GM12878 (cell line): ENCODE measurements at regions of chr1 and their contacts with region 1.

Region 1: DNA sequence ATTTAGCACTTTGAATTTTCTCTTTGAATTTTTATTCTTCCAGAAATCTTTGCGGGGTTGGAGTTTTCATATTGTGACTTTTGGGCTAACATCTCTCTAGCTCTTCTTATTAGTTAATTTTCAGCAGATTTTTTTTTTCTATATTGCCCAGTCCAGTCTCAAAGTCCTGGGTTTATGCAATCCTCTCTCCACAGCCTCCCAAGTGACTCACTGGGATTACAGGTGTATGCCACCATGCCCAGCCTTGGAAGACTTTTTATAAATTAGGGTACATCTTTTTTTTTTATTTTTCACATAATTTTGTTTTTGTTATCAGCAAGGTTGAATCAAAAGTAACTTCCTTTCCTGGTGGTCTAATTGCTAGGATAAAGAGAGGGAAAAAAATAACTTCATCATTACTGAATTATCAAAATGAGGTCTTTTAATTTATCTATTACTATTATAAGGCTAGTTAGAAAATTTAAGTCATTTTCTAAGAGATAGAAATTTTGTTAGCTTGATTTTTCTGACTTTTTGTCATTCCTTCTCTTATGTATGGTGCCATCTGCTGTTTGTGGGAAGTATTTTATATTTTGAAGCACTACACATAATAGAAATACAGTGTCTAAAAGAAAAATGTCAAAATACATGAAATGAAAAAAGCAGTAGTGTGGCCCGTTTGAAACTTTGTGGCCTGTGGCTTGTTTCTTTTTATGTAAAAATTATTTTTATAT is 273.4 kb upstream of the CACYBP start:
- DNase-seq: no peak
- ATAC-seq: peak; percentile 48; the same call in 2 of the 3 replicates
- H3K4me3 ChIP-seq: no peak overlapping the region
- H3K27ac ChIP-seq: no peak overlapping the region
- H3K4me1 ChIP-seq: peaks cover 4% of the 10 kb centered on the region
- H3K27me3 ChIP-seq: no peaks in the 10 kb centered on the region
- CTCF ChIP-seq: peak; percentile 27 to 40 (median 29); a peak in 4 of 6 replicates
- EP300 ChIP-seq: no peak
- POLR2A ChIP-seq: no peak
- RAD21 ChIP-seq: peak; percentile 41; the same call in 1 of the 2 replicates

Region 2: GRCh38 chr1:173853074-173853473 is 873.2 kb before region 1 on chr1:
- CTCF ChIA-PET with region 1: no interaction called
- POLR2A ChIA-PET with region 1: no interaction called
- RAD21 ChIA-PET with region 1: no interaction called
- SMC1A ChIA-PET with region 1: no interaction called
- in situ Hi-C with region 1: no loop called
- intact Hi-C with region 1: no loop called
- DNase-seq: no peak
- ATAC-seq: no peak
- H3K4me3 ChIP-seq: no peak overlapping the region
- H3K27ac ChIP-seq: no peak overlapping the region
- H3K4me1 ChIP-seq: no peaks in the 10 kb centered on the region
- H3K27me3 ChIP-seq: no peaks in the 10 kb centered on the region
- CTCF ChIP-seq: no peak
- EP300 ChIP-seq: no peak
- POLR2A ChIP-seq: no peak
- RAD21 ChIP-seq: no peak

Region 3: GRCh38 chr1:174413632-174414031 is 312.7 kb before region 1 on chr1:
- CTCF ChIA-PET with region 1: interaction called, 5 read pairs
- POLR2A ChIA-PET with region 1: no interaction called
- RAD21 ChIA-PET with region 1: no interaction called
- SMC1A ChIA-PET with region 1: no interaction called
- in situ Hi-C with region 1: no loop called
- intact Hi-C with region 1: loop called (anchors 10 kb)
- DNase-seq: no peak
- ATAC-seq: peak; percentile 76
- H3K4me3 ChIP-seq: no peak overlapping the region
- H3K27ac ChIP-seq: no peak overlapping the region
- H3K4me1 ChIP-seq: no peaks in the 10 kb centered on the region
- H3K27me3 ChIP-seq: no peaks in the 10 kb centered on the region
- CTCF ChIP-seq: peak in 1 of 3 experiments; percentile 21; a peak in 1 of 6 replicates
- EP300 ChIP-seq: no peak
- POLR2A ChIP-seq: no peak
- RAD21 ChIP-seq: 0 out of 2 replicates have a peak, but pooled peaks have one; percentile 13